ENCODE measurements at regions of chr12 and their contacts with region 1.

Region 1: DNA sequence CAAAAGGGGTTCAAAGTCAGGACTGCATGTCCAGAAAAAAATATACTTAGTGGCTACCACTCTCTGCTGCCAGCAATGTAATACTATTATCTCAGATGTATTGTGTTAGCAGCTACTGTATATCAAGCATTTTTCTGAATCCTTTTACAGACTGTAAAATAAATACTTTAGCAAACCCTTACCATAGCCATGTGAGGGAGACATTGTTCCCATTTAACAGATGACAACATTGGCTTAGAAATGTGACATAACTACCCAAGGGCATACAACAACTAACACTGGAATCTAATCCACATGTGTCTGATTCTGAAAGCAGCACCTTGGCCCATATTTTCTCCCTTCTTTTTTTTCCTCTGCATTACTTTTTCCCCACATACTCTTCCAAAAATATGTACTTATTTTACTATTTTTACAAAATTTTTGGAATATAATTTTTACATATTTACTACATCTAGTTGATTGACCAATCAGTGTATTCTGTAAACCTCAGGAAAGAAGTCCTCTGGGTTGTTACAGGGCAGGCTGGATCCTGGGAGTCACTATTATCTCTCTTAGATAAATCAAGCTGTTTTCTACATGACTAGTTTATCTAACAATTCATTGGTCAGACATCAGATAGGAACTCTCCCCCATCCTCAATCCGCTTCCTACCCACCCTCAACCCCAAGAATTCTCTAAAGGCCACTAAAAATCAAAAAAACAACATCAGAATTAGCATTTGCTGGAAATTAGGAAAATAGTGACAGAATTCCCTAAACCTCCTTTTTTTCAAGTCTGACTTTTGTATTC is 154.1 kb downstream of the BTG1 start:
- DNase-seq: peak in 5 of 9 donors; percentile 22 to 64 (median 48)
- ATAC-seq: peak; percentile 83
- H3K4me3 ChIP-seq: no peak overlapping the region
- H3K4me3 Mint-ChIP-seq: peak overlapping the region in 5 of 10 donors; percentile 18 to 50 (median 32)
- H3K27ac ChIP-seq: peak overlapping the region; percentile 26
- H3K27ac Mint-ChIP-seq: peak overlapping the region in 7 of 9 donors; percentile 8 to 92 (median 70)
- H3K4me1 ChIP-seq: peaks cover 9 to 27% of the 10 kb centered on the region in 2 donors
- H3K4me1 Mint-ChIP-seq: peaks cover 9 to 92% (median 79%) of the 10 kb centered on the region in 7 donors
- H3K27me3 ChIP-seq: no peaks in the 10 kb centered on the region
- H3K27me3 Mint-ChIP-seq: no peaks in the 10 kb centered on the region

Region 2: GRCh38 chr12:91577586-91578539 is 413.7 kb before region 1 on chr12:
- CTCF ChIA-PET with region 1: no interaction called
- POLR2A ChIA-PET with region 1: no interaction called
- intact Hi-C with region 1: loop called in 1 of 2 experiments (anchors 1 kb)
- DNase-seq: peak in 6 of 9 donors; percentile 30 to 53 (median 39)
- ATAC-seq: peak; percentile 88
- H3K4me3 ChIP-seq: peak overlapping the region; percentile 39
- H3K4me3 Mint-ChIP-seq: peak overlapping the region; percentile 16 to 93 (median 84)
- H3K27ac ChIP-seq: no peak overlapping the region
- H3K27ac Mint-ChIP-seq: peak overlapping the region; percentile 14 to 94 (median 81)
- H3K4me1 ChIP-seq: peaks cover 0 to 5% of the 10 kb centered on the region in 2 donors
- H3K4me1 Mint-ChIP-seq: peaks cover 12 to 36% (median 19%) of the 10 kb centered on the region in 7 donors
- H3K27me3 ChIP-seq: no peaks in the 10 kb centered on the region
- H3K27me3 Mint-ChIP-seq: peaks cover 0 to 3% (median 0%) of the 10 kb centered on the region in 5 donors

Region 3: DNA sequence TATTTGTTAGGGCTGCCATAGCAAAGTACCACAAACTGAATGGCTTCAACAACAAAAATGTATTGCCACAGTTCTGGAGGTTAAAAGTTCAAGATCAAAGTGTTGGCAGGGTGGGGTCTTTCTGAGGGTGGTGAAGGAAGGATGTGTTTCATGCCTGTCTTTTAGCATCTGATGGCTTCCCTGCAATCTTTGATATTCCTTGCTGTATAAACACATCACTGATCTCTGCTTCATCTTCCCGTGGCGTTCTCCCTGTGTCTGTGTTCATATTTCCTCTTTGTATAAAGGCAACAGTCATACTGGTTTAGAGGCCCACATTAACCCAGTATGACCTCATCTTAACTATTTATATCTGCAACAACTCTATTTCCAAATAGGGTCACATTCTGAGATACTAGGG is 13.4 kb before region 1 on chr12:
- CTCF ChIA-PET with region 1: interaction called, 3 read pairs
- POLR2A ChIA-PET with region 1: interaction called, 5 read pairs
- intact Hi-C with region 1: loop called in 1 of 2 experiments (anchors 1 kb)
- DNase-seq: peak in 7 of 9 donors; percentile 75 to 94 (median 85)
- ATAC-seq: peak; percentile 93
- H3K4me3 ChIP-seq: no peak overlapping the region
- H3K4me3 Mint-ChIP-seq: peak overlapping the region; percentile 3 to 62 (median 46)
- H3K27ac ChIP-seq: peak overlapping the region; percentile 64
- H3K27ac Mint-ChIP-seq: peak overlapping the region; percentile 58 to 96 (median 82)
- H3K4me1 ChIP-seq: peaks cover 6 to 16% of the 10 kb centered on the region in 2 donors
- H3K4me1 Mint-ChIP-seq: peaks cover 12 to 78% (median 48%) of the 10 kb centered on the region in 7 donors
- H3K27me3 ChIP-seq: no peaks in the 10 kb centered on the region
- H3K27me3 Mint-ChIP-seq: no peaks in the 10 kb centered on the region

Region 4: GRCh38 chr12:92002673-92003382 is 11.2 kb after region 1 on chr12:
- CTCF ChIA-PET with region 1: interaction called, 3 read pairs
- POLR2A ChIA-PET with region 1: interaction called, 3 read pairs
- intact Hi-C with region 1: loop called in 1 of 2 experiments (anchors 1 kb)
- DNase-seq: peak in 2 of 9 donors; percentile 12 to 17
- ATAC-seq: peak; percentile 52
- H3K4me3 ChIP-seq: no peak overlapping the region
- H3K4me3 Mint-ChIP-seq: peak overlapping the region in 9 of 10 donors; percentile 50 to 83 (median 69)
- H3K27ac ChIP-seq: peak overlapping the region; percentile 60
- H3K27ac Mint-ChIP-seq: peak overlapping the region; percentile 6 to 98 (median 91)
- H3K4me1 ChIP-seq: peaks cover 0 to 23% of the 10 kb centered on the region in 2 donors
- H3K4me1 Mint-ChIP-seq: peaks cover 14 to 81% (median 66%) of the 10 kb centered on the region in 7 donors
- H3K27me3 ChIP-seq: no peaks in the 10 kb centered on the region
- H3K27me3 Mint-ChIP-seq: no peaks in the 10 kb centered on the region